Motor neuron (in vitro differentiated cells): ENCODE measurements at regions of chr9 and their contacts with region 1.

Region 1: GRCh38 chr9:89999534-90000370 is 394.9 kb downstream of the GADD45G start:
- ATAC-seq: peak; percentile 41 to 84 (median 62)
- H3K4me3 ChIP-seq: no peak overlapping the region
- H3K27ac ChIP-seq: no peak overlapping the region
- H3K4me1 ChIP-seq: peaks cover 38 to 52% of the 10 kb centered on the region in 2 donors

Region 2: DNA sequence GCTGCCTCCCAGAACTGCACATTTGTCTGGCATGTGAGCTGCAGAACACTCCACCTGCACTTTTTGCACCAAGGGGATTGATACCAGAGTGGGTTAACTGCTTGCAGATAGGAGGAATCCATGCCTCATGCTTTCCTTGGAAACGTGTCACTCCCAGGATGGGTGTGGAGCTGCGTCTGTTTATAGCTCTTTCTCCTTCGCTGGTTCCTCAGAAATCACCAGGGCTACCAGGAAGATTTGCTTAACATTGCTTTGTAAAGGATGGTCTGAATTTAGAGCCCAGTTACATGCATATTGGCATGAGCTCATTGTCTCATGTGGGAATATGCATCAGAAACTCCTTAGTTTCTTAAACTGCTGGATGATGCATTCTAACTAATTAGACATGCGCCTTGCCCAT is 160.3 kb before region 1 on chr9:
- in situ Hi-C with region 1: loop called in 1 of 9 experiments (anchors 25 kb)
- ATAC-seq: peak; percentile 73 to 88 (median 80)
- H3K4me3 ChIP-seq: no peak overlapping the region
- H3K27ac ChIP-seq: no peak overlapping the region
- H3K4me1 ChIP-seq: peaks cover 34 to 39% of the 10 kb centered on the region in 2 donors

Region 3: DNA sequence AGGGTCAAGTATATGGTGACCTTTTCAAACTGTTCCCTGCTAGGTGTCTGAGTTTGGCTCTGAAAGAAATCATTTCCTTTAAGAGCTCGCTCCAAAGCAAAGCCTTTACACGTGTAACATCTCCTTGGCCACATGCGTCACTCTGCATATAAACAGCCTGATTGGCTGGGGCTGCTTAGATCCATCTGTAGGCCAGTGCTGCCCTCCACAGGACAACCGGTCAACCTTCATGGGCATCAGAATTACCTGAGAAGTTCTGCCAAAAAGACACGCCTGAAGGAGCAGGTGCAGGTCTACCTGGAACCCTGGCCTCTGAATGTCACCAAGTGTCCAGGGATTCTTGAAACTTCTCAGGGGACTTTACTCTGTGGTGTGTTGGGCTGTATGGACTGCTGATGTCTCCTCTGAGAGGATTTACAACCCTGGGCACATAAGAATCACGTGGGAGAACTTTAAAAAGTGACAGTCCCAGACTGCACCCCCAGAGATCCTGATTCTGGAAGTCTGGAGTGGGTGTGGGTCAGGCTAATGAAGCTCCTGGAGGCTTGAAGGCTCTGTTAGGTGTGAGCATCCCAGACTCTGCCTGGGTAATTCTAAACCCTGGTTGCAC is 102.6 kb after region 1 on chr9:
- in situ Hi-C with region 1: loop called in 1 of 9 experiments (anchors 25 kb)
- ATAC-seq: peak; percentile 71 to 100 (median 87)
- H3K4me3 ChIP-seq: no peak overlapping the region
- H3K27ac ChIP-seq: no peak overlapping the region
- H3K4me1 ChIP-seq: peaks cover 9 to 17% of the 10 kb centered on the region in 2 donors

Region 4: DNA sequence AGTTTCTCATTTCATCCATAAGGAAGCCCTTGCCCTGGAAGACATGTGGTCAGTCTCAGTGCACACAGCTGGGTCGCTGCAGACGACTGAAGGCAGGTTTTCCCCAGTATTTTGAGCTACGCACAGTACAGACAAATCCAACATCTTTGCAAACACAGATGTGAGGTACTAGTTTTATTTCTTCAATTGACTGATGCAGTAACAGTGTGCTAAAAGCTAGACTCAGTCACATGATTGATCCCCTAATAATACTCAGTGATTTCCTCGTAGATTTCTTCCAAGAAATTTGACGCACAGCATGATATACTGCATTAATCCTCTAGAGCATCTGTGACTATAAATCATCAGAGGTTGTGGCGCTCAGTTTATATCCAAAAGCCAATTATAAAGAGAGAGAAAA is 296.8 kb after region 1 on chr9:
- in situ Hi-C with region 1: no loop called
- ATAC-seq: peak in 6 of 8 experiments; percentile 28 to 79 (median 70)
- H3K4me3 ChIP-seq: no peak overlapping the region
- H3K27ac ChIP-seq: peak overlapping the region in 1 of 2 donors; percentile 12
- H3K4me1 ChIP-seq: peaks cover 17 to 35% of the 10 kb centered on the region in 2 donors